WTC11 (cell line): ENCODE measurements at regions of chr17 and their contacts with region 1.

Region 1: GRCh38 chr17:78421484-78422266 is 43.2 kb downstream of the PGS1 start:
- DNase-seq: peak; percentile 91
- ATAC-seq: peak; percentile 84
- H3K4me3 Mint-ChIP-seq: no peak overlapping the region
- H3K27ac Mint-ChIP-seq: peak overlapping the region; percentile 91
- H3K4me1 Mint-ChIP-seq: peaks cover 17% of the 10 kb centered on the region
- H3K27me3 Mint-ChIP-seq: no peaks in the 10 kb centered on the region
- CTCF ChIP-seq: peak; percentile 92

Region 2: DNA sequence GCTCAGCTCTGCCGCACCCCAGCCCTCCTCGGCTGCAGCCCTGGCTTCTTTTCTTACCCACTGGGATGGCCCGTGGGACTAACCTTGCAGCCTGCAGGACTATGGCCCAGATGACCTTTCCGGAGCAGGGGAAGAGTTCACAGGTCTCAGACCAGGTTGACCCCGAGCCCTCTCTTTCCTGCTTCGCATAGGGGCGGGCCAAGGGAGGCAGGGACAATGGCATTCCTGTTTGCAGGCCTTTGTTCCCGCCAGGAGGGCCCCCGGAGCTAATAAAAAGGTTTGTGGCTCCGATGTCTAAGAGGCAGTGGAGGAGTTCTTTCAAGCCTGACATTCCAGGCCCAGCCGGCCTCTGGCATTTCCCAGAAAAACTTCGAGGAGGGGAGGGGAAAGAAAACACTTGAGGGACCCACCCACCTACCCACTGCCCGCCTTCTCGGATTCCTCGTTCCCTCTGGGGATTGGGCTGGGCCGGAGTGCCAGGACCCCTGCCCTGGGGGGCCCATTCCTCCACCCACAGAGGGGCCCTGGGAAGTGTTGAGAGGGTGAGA is 56.0 kb before region 1 on chr17:
- CTCF ChIA-PET with region 1: interaction called, 115 read pairs
- POLR2A ChIA-PET with region 1: interaction called, 8 read pairs
- DNase-seq: peak; percentile 92
- ATAC-seq: peak; percentile 50
- H3K4me3 Mint-ChIP-seq: peak overlapping the region; percentile 46
- H3K27ac Mint-ChIP-seq: peak overlapping the region; percentile 97
- H3K4me1 Mint-ChIP-seq: peaks cover 87% of the 10 kb centered on the region
- H3K27me3 Mint-ChIP-seq: no peaks in the 10 kb centered on the region
- CTCF ChIP-seq: no peak

Region 3: GRCh38 chr17:78383725-78384471 is 37.8 kb before region 1 on chr17:
- CTCF ChIA-PET with region 1: interaction called, 16 read pairs
- POLR2A ChIA-PET with region 1: no interaction called
- DNase-seq: no peak
- ATAC-seq: peak; percentile 9; the same call in 1 of the 2 replicates
- H3K4me3 Mint-ChIP-seq: no peak overlapping the region
- H3K27ac Mint-ChIP-seq: peak overlapping the region; percentile 82
- H3K4me1 Mint-ChIP-seq: peaks cover 80% of the 10 kb centered on the region
- H3K27me3 Mint-ChIP-seq: no peaks in the 10 kb centered on the region
- CTCF ChIP-seq: no peak

Region 4: DNA sequence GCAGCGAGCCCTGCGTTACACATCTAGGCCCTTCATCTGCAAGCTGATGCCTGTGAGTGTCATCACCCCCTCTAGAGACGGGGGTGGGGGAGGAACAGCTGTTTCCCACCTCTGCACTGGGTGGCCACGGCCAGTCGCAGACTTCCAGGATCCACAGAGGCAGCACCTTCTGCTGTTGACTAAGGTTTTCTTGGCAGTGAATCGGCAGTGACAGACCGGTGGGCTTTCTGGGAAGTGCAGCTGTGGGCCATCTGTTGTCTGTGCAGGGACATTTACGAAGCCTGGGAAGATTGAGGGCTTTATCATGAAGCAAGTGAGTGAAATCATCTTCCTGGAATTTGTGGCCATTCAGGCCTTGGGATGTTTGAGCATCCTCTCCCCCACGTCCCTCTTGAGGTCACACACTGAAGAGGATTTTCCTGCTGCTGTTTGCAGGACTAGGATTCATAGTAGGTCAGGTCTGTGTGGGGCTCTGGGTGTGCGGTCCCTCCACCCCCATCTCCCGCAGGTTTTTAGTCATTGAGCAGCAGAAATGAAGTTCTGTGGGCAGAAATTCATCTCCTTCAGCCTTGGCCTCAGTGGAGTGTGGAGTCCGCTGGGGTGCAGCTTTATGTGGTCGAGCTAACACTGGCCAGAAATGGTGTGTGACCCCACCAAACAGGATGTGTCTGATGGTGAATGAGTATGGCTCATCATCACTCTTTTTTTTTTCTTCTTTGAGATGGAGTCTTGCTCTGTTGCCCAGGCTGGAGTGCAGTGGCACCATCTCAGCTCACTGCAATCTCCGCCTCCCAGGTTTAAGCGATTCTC is 31.2 kb before region 1 on chr17:
- CTCF ChIA-PET with region 1: interaction called, 25 read pairs
- POLR2A ChIA-PET with region 1: no interaction called
- DNase-seq: no peak
- ATAC-seq: peak; percentile 59
- H3K4me3 Mint-ChIP-seq: no peak overlapping the region
- H3K27ac Mint-ChIP-seq: peak overlapping the region; percentile 89
- H3K4me1 Mint-ChIP-seq: peaks cover 44% of the 10 kb centered on the region
- H3K27me3 Mint-ChIP-seq: no peaks in the 10 kb centered on the region
- CTCF ChIP-seq: 0 out of 2 replicates have a peak, but pooled peaks have one; percentile 14

Region 5: DNA sequence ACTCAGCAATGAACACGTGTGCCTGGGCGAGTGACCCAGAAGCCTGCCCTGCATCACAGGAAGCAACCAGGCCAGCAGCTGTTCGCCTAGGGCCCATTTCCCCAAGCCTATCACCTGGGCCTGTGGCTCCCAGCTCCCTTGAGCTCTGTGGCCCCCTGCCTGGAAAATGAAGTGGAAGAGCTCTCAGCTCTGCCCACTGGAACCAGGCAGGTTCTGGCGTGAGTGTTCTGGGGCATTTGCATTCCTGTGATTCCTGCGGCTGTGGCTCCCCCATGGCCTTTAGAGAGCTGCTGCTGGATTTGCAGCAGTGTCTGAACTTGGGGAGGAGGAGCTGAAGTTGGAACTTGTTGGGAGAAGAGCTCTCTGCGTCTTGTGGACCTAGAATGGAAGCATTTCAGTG is 20.4 kb before region 1 on chr17:
- CTCF ChIA-PET with region 1: interaction called, 11 read pairs
- POLR2A ChIA-PET with region 1: interaction called, 4 read pairs
- DNase-seq: no peak
- ATAC-seq: no peak
- H3K4me3 Mint-ChIP-seq: no peak overlapping the region
- H3K27ac Mint-ChIP-seq: peak overlapping the region; percentile 45; the same call in 1 of the 2 replicates
- H3K4me1 Mint-ChIP-seq: no peaks in the 10 kb centered on the region
- H3K27me3 Mint-ChIP-seq: no peaks in the 10 kb centered on the region
- CTCF ChIP-seq: no peak

Region 6: DNA sequence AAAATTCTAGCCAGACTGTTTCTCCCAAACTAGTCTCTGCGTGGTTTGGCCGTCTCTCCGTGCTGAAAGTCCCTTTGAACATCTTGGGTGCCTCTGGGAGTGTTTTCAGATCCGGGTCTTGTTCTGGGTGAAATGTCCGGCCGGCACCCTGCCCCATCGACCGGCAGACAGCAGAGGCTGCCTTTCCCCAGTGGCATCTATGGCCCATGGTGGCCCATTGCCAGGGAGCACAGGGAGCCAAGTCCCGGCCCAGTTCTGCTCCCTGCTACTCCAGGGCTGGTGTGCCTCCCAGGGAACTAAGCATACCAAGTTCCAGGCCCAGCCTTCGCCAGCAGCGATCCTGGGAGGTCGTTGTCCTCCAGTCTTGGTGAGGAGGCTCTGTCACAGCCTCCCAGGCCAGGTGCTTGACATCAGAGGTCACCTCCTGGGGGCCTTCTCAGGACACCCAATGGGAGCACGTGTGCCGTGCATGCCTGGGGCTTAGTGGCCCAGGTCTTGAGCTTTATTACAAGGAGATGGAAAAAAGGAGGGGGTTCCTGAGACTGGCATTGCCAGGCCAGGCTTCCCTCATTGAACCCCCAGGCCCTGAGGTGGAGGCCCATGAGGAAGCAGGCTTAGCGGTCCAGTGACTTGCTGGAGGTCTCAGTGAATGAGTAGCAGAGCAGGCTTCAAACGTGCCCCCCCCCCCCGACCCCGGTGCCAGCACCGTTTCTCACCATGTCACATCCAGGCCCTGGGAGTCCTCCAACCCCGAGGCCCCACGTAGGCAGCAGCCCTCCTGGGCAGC is 10.7 kb after region 1 on chr17:
- CTCF ChIA-PET with region 1: interaction called, 13 read pairs
- POLR2A ChIA-PET with region 1: no interaction called
- DNase-seq: no peak
- ATAC-seq: no peak
- H3K4me3 Mint-ChIP-seq: no peak overlapping the region
- H3K27ac Mint-ChIP-seq: no peak overlapping the region
- H3K4me1 Mint-ChIP-seq: peaks cover 34% of the 10 kb centered on the region
- H3K27me3 Mint-ChIP-seq: no peaks in the 10 kb centered on the region
- CTCF ChIP-seq: no peak

Region 7: GRCh38 chr17:78517421-78517820 is 95.7 kb after region 1 on chr17:
- CTCF ChIA-PET with region 1: no interaction called
- POLR2A ChIA-PET with region 1: no interaction called
- DNase-seq: no peak
- ATAC-seq: no peak
- H3K4me3 Mint-ChIP-seq: no peak overlapping the region
- H3K27ac Mint-ChIP-seq: no peak overlapping the region
- H3K4me1 Mint-ChIP-seq: no peaks in the 10 kb centered on the region
- H3K27me3 Mint-ChIP-seq: no peaks in the 10 kb centered on the region
- CTCF ChIP-seq: no peak